Activated naive CD4-positive, alpha-beta T cell treated with anti-CD3 and anti-CD28 coated beads for 36 hours (primary cell): ENCODE measurements at regions of chr4 and their contacts with region 1.

Region 1: GRCh38 chr4:145097821-145098674 is at the starts of genes ABCE1 and ANAPC10:
- DNase-seq: peak; percentile 97
- H3K4me3 Mint-ChIP-seq: peak within 1 kb of the TSS; percentile 92
- H3K27ac Mint-ChIP-seq: peak within 1 kb of the TSS; percentile 97
- H3K4me1 Mint-ChIP-seq: peaks cover 23% of the 10 kb centered on the region
- H3K27me3 Mint-ChIP-seq: no peaks in the 10 kb centered on the region
- total RNA-seq, gene ABCE1: 164 to 174 TPM
- total RNA-seq, gene ANAPC10: 23.5 to 26.5 TPM

Region 2: DNA sequence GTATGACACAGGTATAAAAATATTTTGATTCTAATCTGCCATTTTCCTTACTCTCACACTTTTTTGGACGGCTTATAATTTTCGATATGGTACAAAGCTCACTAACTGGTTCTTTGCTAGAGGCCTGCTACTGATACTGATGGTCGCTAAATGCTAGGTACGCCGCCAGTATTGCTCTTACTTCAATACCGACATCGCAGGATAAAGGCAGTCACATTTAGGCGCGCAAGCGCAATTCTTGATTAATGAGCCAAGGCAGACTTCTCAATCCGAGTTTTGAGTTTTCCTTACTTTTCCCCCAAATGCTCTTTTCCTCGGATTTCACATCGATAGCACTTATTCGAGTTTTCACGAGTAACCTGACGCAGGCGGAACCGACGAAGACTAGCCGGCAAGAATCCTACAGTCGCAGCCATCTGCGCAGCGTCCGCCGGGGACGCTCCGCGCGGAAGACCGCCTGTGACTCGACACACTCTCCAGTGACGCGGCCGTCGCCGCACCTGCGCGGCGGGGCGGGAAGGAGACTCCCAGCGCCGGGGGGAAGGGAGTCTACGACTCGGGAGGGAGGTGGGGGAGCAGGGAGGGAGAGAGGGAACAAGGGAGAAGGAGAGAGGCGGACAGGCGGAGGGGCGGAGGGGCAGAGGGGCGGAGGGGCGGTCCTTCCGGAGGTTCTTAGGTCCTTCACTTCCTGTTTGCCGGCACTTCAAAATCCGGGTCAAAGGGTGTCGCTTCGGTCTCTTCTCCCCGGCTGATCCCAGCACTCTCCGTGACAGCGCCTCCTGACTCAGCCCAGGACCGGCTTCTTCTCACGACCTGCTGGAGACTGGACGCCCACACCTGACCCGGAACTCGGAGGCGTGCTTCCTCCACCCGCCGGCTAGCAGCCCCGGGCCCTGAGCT is 1913.6 kb before region 1 on chr4 and contains the start of gene USP38:
- CTCF ChIA-PET with region 1: no interaction called
- intact Hi-C with region 1: loop called (anchors 5 kb)
- DNase-seq: peak; percentile 93
- H3K4me3 Mint-ChIP-seq: peak within 1 kb of the TSS; percentile 95
- H3K27ac Mint-ChIP-seq: peak within 1 kb of the TSS; percentile 97
- H3K4me1 Mint-ChIP-seq: peaks cover 40% of the 10 kb centered on the region
- H3K27me3 Mint-ChIP-seq: no peaks in the 10 kb centered on the region
- total RNA-seq, gene USP38: 14.4 to 15.5 TPM

Region 3: GRCh38 chr4:144174401-144175067 is 923.5 kb before region 1 on chr4:
- CTCF ChIA-PET with region 1: no interaction called
- intact Hi-C with region 1: loop called (anchors 1 kb)
- DNase-seq: peak; percentile 32
- H3K4me3 Mint-ChIP-seq: no peak overlapping the region
- H3K27ac Mint-ChIP-seq: peak overlapping the region; percentile 24
- H3K4me1 Mint-ChIP-seq: peaks cover 15% of the 10 kb centered on the region
- H3K27me3 Mint-ChIP-seq: peaks cover 4% of the 10 kb centered on the region

Region 4: DNA sequence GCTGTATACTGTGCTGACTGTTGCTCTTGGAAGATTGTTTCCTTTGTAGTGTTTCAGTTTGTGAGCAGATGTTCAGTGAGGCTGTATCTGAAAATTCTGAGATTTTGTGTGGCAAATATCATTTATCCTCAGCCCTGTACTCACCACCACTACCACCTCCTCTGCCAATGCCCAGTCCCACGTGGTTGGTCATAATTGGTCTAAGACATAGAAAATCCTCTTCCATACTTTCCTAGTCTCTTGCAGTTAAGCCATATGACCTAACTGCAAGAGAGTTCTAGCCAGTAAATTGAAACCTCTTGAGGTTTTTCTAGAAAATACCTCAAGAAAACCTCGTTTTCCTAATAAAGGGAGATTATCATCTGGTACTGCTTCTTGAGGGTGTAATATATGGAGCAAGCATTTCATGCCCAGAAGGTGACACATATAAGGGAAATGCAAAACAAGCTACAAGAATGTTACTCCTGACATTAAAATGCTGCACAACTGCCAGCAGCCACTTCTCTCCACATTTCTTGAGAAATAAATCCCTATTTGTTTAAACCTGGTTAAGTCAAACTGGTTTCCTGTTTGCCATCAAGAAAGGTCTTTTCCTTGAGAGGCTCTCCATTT is 32.8 kb after region 1 on chr4:
- CTCF ChIA-PET with region 1: no interaction called
- intact Hi-C with region 1: loop called (anchors 1 kb)
- DNase-seq: no peak
- H3K4me3 Mint-ChIP-seq: no peak overlapping the region
- H3K27ac Mint-ChIP-seq: peak overlapping the region; percentile 65
- H3K4me1 Mint-ChIP-seq: peaks cover 50% of the 10 kb centered on the region
- H3K27me3 Mint-ChIP-seq: no peaks in the 10 kb centered on the region

Region 5: GRCh38 chr4:145308598-145308997 is 210.6 kb after region 1 on chr4:
- CTCF ChIA-PET with region 1: no interaction called
- intact Hi-C with region 1: loop called (anchors 2 kb)
- DNase-seq: peak; percentile 26
- H3K4me3 Mint-ChIP-seq: no peak overlapping the region
- H3K27ac Mint-ChIP-seq: peak overlapping the region; percentile 72
- H3K4me1 Mint-ChIP-seq: peaks cover 34% of the 10 kb centered on the region
- H3K27me3 Mint-ChIP-seq: peaks cover 4% of the 10 kb centered on the region

Region 6: DNA sequence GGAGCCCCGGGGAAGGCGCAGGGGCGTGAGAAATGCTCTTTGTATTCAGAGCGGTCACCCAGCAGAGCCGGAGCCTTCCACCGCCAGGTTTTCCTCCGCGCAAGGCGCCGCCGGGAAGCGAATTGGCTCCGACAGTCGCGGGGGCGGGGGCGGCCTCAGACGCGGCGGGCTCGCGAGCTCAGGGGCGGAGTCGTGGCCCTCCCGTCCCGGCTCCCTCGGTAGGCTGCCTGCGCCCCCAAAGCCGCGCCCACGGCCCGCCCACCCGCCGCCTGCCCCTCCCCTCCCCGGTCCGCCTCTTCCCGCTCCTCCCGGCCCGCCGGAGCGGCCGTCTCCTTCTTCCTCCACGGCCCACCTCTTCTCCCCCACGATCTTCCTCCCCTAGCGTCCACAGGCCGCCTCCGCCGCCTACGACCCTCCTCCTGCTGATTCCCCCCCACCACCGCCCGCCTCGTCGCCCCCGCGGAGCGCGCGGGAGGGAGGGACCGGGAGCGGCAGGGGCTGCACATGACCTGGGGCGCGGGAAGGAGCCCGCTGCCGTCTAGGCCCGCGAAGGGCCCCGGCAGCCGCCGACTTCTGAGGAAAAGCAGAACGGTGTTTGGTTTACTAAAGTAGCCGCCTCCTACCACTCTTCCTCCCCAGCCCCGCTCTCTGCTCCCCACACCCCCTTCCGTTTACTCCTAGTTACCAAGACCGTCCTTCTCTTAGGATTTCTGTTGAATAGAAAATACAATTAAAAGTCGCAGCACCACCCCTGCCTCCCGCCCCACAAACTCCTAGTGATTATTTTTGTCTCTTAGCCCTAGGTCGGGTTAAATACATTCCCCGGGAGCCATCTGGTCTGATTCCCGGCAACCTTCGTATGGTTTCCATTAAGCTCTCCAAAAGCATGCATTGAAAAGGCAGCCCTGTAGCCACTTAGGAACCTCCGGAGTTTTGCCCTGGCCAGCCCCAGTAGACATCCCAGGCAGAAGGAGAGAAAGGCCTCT is 635.1 kb after region 1 on chr4:
- CTCF ChIA-PET with region 1: no interaction called
- intact Hi-C with region 1: loop called (anchors 1 kb)
- DNase-seq: peak; percentile 91
- H3K4me3 Mint-ChIP-seq: peak overlapping the region; percentile 75
- H3K27ac Mint-ChIP-seq: peak overlapping the region; percentile 36
- H3K4me1 Mint-ChIP-seq: peaks cover 7% of the 10 kb centered on the region
- H3K27me3 Mint-ChIP-seq: peaks cover 10% of the 10 kb centered on the region